ENCODE measurements at regions of chr13 and their contacts with region 1.

Region 1: DNA sequence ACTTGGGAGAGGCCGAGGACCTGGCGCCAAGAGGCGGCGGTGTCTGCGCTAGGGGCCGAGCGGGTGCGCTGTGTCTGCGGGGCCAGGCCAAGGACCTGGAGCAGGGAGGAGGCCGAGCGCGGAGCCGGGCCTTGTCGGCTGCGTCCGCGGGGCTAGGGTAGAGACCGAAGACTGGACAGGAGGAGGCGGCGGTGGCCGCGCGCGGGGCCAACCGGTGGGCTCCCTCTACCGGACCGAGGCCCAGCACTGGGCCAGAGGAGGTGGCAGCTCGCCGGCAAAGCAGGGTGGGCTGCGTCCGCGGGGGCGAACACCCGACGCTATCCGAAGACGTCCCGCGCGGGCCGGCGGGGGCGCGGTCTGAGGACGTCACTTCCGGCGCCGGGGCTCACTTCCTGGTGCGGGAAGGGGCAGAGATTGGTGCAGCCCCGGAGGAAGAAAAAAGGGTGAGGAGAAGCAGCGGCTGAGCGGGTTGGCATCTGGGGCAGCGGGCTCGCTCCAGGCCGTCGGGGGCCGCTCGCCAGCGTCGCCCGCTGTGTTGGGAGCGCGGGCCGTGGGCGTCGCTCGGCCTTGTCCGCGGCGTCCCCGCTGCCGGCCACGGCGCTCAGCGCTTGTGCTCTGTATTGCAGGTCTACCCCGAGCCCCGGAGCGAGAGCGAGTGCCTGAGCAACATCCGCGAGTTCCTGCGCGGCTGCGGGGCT is 38.3 kb downstream of the ARHGEF7 start:
- DNase-seq: peak; percentile 96
- ATAC-seq: peak; percentile 89
- H3K4me3 Mint-ChIP-seq: peak overlapping the region; percentile 83
- H3K27ac Mint-ChIP-seq: peak overlapping the region; percentile 90
- H3K4me1 Mint-ChIP-seq: peaks cover 33% of the 10 kb centered on the region
- H3K27me3 Mint-ChIP-seq: no peaks in the 10 kb centered on the region

Region 2: GRCh38 chr13:110826861-110827672 is 326.4 kb before region 1 on chr13:
- CTCF ChIA-PET with region 1: no interaction called
- POLR2A ChIA-PET with region 1: no interaction called
- intact Hi-C with region 1: no loop called
- DNase-seq: no peak
- ATAC-seq: no peak
- H3K4me3 Mint-ChIP-seq: no peak overlapping the region
- H3K27ac Mint-ChIP-seq: no peak overlapping the region
- H3K4me1 Mint-ChIP-seq: no peaks in the 10 kb centered on the region
- H3K27me3 Mint-ChIP-seq: peaks cover 2% of the 10 kb centered on the region

Region 3: GRCh38 chr13:111114362-111115060 is 38.9 kb before region 1 on chr13:
- CTCF ChIA-PET with region 1: no interaction called
- POLR2A ChIA-PET with region 1: no interaction called
- intact Hi-C with region 1: loop called in 1 of 2 experiments (anchors 1 kb)
- DNase-seq: peak; percentile 44
- ATAC-seq: peak; percentile 66
- H3K4me3 Mint-ChIP-seq: peak overlapping the region; percentile 75
- H3K27ac Mint-ChIP-seq: no peak overlapping the region
- H3K4me1 Mint-ChIP-seq: peaks cover 12% of the 10 kb centered on the region
- H3K27me3 Mint-ChIP-seq: peaks cover 66% of the 10 kb centered on the region

Region 4: DNA sequence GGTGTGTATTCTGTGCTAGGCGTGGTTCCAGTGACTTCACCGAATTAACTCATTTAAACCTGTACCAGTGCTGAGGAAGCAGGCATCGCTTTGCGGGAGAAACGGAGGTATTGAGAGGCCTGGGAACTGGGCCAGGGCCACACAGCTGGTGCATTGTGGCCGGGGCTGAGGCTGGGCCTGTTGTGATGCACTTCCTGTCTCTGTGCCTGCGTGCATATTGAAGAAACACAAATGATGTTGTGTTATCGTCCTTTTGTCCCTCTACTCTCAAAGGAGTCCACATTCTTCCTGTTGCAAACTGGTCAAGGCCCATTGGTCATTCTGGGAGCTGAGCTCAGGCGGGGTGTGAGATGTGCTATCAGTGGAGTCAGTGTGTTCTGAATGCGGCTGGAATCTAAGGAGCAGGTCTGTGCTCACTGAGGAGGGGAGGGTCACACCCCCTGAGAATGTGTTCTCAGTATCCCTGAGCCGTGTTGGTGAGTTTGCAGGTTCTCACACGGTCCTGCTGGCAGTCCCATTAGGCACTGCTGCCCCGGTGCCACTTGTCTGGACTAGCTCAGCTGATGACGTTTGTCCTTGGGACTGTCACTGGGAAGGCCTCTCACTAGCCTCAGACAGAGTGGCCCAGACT is 23.8 kb after region 1 on chr13:
- CTCF ChIA-PET with region 1: interaction called, 7 read pairs
- POLR2A ChIA-PET with region 1: no interaction called
- intact Hi-C with region 1: loop called in 1 of 2 experiments (anchors 1 kb)
- DNase-seq: peak; percentile 72
- ATAC-seq: peak; percentile 76
- H3K4me3 Mint-ChIP-seq: no peak overlapping the region
- H3K27ac Mint-ChIP-seq: peak overlapping the region; percentile 96
- H3K4me1 Mint-ChIP-seq: peaks cover 70% of the 10 kb centered on the region
- H3K27me3 Mint-ChIP-seq: no peaks in the 10 kb centered on the region

Region 5: DNA sequence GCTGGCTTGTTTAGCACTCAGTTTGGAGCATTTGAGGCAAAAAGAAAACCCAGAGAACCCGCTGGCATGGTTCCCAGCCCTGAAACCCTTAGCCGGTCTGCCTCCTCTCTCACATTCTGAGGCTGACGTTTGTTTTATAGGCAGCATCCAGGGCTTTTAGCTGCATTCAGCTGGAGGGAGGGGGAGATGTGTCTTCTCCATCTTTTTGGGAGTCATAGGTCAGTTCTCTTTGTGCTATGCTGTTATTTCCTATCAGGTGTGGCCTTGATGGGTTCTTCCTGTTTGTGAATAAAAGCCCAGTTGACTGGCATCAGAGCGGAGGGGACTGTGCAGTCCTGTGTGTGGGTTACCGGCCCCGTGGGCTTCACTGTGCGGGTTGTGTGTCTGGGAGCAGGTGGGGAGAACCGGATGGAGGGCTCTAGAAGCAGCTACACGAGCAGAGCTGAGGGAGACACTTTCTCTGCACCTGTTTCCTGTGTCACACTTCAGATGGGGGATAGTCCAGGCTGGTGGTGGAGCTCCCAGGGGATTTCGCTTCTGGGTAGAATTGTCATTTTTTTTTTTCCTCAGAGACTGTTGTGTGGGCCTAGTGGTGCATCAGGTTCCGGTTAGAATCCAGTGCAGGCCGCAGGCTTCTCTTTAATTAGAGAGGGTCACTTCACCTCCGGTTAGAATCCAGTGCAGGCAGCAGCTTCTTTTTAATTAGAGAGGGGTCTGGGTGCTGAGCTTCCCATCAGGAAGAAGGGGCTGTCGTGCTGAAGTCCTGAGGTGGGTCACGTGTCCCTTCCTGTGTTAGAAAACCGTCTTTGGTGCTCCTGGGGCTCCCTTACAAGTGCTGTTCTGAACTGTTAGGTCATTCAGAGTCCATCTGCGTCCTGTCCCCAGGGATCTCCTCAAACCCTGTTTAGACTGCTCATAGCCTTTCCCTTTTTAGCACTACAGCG is 31.3 kb after region 1 on chr13:
- CTCF ChIA-PET with region 1: interaction called, 7 read pairs
- POLR2A ChIA-PET with region 1: no interaction called
- intact Hi-C with region 1: loop called (anchors 1 to 2 kb)
- DNase-seq: peak; percentile 55
- ATAC-seq: peak; percentile 69
- H3K4me3 Mint-ChIP-seq: peak overlapping the region; percentile 53
- H3K27ac Mint-ChIP-seq: peak overlapping the region; percentile 83
- H3K4me1 Mint-ChIP-seq: peaks cover 95% of the 10 kb centered on the region
- H3K27me3 Mint-ChIP-seq: no peaks in the 10 kb centered on the region

Region 6: GRCh38 chr13:111202745-111203144 is 49.3 kb after region 1 on chr13:
- CTCF ChIA-PET with region 1: interaction called, 4 read pairs
- POLR2A ChIA-PET with region 1: no interaction called
- intact Hi-C with region 1: loop called in 1 of 2 experiments (anchors 1 kb)
- DNase-seq: peak; percentile 43
- ATAC-seq: peak; percentile 89
- H3K4me3 Mint-ChIP-seq: no peak overlapping the region
- H3K27ac Mint-ChIP-seq: peak overlapping the region; percentile 70
- H3K4me1 Mint-ChIP-seq: peaks cover 60% of the 10 kb centered on the region
- H3K27me3 Mint-ChIP-seq: no peaks in the 10 kb centered on the region

Region 7: GRCh38 chr13:111216166-111216960 is 62.9 kb after region 1 on chr13:
- CTCF ChIA-PET with region 1: interaction called, 5 read pairs
- POLR2A ChIA-PET with region 1: no interaction called
- intact Hi-C with region 1: loop called (anchors 2 to 5 kb)
- DNase-seq: peak; percentile 59
- ATAC-seq: peak; percentile 77
- H3K4me3 Mint-ChIP-seq: no peak overlapping the region
- H3K27ac Mint-ChIP-seq: no peak overlapping the region
- H3K4me1 Mint-ChIP-seq: peaks cover 31% of the 10 kb centered on the region
- H3K27me3 Mint-ChIP-seq: no peaks in the 10 kb centered on the region

Measured in activated CD4-positive, alpha-beta T cell treated with anti-CD3 and anti-CD28 coated beads for 36 hours (primary cell).